ENCODE measurements at regions of chr6 and their contacts with region 1.

Region 1: DNA sequence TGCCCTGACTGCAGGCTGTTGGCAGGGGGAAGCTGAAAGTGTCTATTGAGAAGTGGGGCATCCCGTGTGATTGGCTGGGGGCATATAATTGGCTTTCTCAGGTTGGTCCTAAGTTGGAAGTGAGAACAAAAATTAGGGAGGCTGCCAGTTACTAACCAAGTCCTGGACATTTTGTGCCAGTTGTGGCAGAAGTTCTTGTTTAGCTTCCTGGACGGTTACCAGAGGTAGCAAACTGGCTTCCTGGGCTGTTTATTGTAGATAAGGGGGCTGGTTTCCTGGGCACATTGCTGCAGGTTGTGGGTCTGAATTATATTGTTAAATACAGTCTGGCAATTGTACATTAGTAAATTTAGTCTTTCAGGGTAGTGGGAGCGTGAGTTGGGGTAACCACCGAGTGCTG is 50.6 kb upstream of the SLC2A12 start:
- DNase-seq: no peak

Region 2: DNA sequence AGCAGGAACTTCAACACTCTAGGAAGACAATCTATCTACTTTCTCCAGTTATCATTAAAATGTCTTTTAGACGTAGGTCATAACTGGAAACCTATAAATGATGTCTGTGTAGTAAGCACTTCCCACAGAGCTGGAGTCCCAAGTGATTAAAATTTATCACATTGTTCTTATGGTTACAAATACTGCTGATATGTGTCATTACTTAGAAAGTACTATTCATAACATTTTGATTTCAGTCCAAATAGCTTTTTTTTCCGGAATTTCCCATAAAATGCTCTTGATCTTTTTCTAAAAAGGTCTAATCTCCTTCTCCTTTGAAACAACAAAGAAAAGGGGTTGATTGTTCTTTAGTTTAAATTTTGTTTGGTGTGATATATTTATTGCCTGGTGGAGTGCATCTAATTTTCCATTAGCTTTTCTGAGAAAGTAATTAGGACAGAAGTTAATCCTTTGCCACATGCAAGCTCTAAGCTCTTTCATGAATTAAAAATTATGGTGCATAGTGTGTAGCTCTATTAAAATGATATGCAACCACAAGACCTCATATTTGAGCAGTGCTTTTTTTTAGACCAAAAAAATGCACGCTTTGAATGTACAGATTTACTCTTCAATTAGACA is 346.8 kb before region 1 on chr6:
- intact Hi-C with region 1: no loop called
- DNase-seq: no peak

Region 3: DNA sequence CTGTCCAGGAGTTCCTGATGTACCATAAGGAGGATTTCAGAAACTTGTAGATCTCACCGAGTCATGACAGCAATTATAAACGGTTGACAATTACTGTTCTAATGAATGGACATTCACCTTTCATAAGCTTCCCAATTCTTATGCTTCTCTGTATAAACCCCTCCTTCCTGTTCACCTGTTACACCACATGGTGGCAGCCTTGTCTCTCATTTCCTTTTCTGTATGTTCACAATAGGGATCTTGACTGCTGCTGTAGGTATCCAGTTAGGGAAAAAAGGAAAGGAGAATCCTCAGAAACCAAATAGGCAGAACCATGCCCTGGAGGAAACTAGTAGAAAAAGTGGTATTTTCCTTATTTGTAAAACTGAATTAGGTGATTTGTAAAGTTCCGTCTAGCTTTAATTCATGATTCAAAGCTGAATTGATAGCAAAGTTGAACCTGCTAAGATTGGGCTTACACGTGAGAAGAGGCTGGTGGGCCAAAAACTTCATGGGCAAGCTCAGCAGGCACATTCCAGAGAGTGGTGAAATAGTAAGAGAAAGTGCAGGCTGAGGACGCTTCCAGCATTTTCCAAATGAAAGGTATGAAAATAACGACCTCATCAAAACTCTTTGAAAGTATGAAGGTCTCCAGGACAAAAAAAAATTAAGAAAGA is 178.9 kb before region 1 on chr6:
- intact Hi-C with region 1: loop called in 1 of 2 experiments (anchors 5 kb)
- DNase-seq: no peak

Region 4: DNA sequence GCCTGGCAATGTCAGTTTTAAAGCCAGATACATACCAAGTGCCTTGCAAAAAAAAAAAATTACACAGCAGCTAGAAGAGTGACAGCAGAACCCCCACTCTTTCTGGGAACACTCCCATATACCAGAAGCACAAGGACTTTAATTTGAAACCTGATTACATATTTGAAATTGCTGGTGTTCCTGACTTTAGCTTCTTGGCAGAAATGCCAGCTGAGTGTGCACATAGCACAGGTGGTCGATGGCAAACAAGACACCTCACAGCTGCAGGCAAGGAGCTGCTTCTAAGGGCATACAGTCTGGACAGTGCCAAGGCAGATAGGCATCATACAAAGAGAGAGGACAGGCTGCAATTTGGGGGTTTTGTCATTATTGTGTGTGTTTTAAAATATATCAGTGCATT is 365.6 kb after region 1 on chr6:
- intact Hi-C with region 1: no loop called
- DNase-seq: no peak